Psoas muscle (tissue), 8 donors: ENCODE measurements at regions of chr1 and their contacts with region 1.

Region 1: GRCh38 chr1:117453958-117454357 is 86.7 kb downstream of the MAN1A2 start:
- DNase-seq: no peak
- ATAC-seq: no peak
- H3K4me3 ChIP-seq: no peak overlapping the region
- H3K27ac ChIP-seq: no peak overlapping the region
- H3K4me1 ChIP-seq: no peaks in the 10 kb centered on the region
- H3K27me3 ChIP-seq: no peaks in the 10 kb centered on the region
- CTCF ChIP-seq: no peak

Region 2: DNA sequence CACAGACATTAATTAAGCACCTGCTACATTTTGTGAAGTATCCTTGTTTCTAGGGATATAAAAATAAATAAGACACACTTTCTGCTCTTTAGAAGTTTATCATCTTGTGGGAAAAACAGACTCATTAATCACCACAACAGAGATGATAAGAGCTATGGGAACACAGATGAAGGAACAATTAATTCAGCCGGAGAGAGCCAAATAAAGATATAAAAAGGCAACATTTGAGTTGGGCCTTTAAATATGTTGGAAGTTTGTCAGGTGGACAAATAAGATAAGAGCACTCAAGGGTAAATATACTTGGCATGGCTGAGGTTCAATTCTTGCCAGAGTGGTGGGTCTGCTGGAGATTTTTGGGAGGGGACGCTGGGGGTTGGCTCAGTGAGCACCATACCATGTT is 209.0 kb before region 1 on chr1:
- intact Hi-C with region 1: loop called in 1 of 2 experiments (anchors 10 kb)
- DNase-seq: no peak
- ATAC-seq: no peak
- H3K4me3 ChIP-seq: no peak overlapping the region
- H3K27ac ChIP-seq: no peak overlapping the region
- H3K4me1 ChIP-seq: no peaks in the 10 kb centered on the region
- H3K27me3 ChIP-seq: no peaks in the 10 kb centered on the region
- CTCF ChIP-seq: no peak

Region 3: DNA sequence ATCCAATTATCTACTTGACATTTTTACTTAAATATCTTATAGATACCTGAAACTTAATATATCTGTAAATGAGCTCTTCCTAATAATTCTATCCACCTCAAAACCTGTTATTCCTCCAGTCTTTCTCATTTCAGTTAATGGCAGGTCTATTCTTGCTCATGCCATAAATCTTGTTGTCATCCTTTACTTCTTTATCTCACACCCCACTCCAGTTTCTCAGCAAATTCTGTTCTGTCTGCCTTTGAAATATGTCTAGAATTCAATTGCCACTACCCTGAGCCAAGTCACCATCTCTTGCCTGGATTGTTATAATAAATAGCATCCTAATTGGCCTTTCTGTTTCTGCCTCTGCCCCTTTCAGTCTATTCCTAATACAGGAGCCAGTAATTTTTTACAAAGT is 19.1 kb after region 1 on chr1:
- intact Hi-C with region 1: no loop called
- DNase-seq: no peak
- ATAC-seq: no peak
- H3K4me3 ChIP-seq: no peak overlapping the region
- H3K27ac ChIP-seq: no peak overlapping the region
- H3K4me1 ChIP-seq: no peaks in the 10 kb centered on the region
- H3K27me3 ChIP-seq: no peaks in the 10 kb centered on the region
- CTCF ChIP-seq: no peak